Activated T-helper 1 cell treated with anti-CD3 and anti-CD28 coated beads, Interleukin-12 subunit alpha, Interleukin-12 subunit beta, Interleukin-2, Interleukin-4 antibody, amounts not matched to agents 30 ng/mL and 10 ng/mL and 1 ng/mL, durations not matched to agents 14 hours and 24 hours and 36 hours (primary cell): ENCODE measurements at regions of chr2 and their contacts with region 1.

Region 1: DNA sequence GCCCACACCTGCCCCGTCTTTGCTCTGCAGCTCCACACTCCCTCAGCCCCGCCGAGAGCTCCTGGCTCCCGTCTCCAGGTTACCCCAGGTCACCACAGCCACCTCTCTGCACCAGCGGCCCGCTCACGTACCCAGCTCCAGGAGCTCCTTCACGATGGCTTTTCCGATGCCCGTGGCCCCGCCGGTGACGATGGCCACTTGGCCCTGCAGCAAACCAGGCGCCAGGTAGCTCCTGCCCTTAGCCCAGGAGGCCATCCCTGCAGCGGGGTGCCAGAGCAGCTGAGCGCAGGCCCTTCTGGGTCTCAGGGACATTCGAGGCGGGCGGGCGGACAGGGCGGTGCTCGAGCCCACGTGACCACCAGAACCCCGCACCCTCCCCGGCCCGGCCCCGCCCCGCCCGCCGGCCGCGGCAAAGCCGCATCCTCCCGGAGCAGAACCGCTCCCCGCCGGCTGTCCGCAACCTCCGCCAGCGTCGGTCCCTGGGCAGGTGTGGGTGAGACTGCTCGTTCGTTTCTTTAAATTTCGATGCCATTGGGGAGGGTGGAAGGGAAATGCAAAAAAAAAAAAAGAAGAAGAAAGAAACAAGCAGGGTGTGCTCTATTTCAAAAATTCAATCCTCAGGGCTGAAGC is at the starts of genes PECR and TMEM169:
- DNase-seq: peak; percentile 74
- H3K4me3 Mint-ChIP-seq: peak within 1 kb of the TSS; percentile 99
- H3K27ac Mint-ChIP-seq: peak within 1 kb of the TSS; percentile 84
- H3K4me1 Mint-ChIP-seq: peaks cover 49% of the 10 kb centered on the region
- H3K27me3 Mint-ChIP-seq: no peaks in the 10 kb centered on the region
- total RNA-seq, gene PECR: 14.0 and 17.6 TPM in 2 replicates
- total RNA-seq, gene TMEM169: 0.93 and 2.2 TPM in 2 replicates

Region 2: DNA sequence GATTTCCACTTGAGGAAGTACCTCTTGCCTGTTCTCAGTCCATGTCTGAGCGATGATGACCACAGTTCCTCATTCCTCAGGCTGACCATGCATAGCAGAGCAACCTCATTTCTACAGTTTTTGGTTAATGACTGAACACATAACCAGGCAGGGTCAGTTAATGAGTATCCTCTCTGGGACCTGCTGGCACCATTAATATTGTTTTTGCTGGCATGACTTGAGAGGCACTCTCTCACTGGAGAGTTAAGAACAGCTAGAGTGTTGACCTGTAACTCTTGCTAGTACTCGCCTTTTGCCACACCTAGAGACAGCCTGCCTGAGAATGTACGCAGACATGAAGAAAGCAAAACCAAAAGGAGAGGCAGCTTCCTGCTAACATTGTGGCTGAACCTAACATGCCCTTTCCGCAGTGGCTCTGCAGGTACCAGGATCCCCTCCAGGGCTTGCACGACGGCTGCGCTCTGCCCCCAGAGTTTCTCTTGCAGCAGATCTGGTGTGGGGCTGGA is 23.9 kb before region 1 on chr2:
- intact Hi-C with region 1: loop called (anchors 2 kb)
- DNase-seq: peak; percentile 60
- H3K4me3 Mint-ChIP-seq: peak overlapping the region; percentile 81
- H3K27ac Mint-ChIP-seq: peak overlapping the region; percentile 91
- H3K4me1 Mint-ChIP-seq: peaks cover 32% of the 10 kb centered on the region
- H3K27me3 Mint-ChIP-seq: no peaks in the 10 kb centered on the region

Region 3: GRCh38 chr2:216119986-216120385 is 38.4 kb after region 1 on chr2:
- intact Hi-C with region 1: loop called (anchors 1 kb)
- DNase-seq: no peak
- H3K4me3 Mint-ChIP-seq: peak overlapping the region; percentile 78
- H3K27ac Mint-ChIP-seq: peak overlapping the region; percentile 95
- H3K4me1 Mint-ChIP-seq: peaks cover 78% of the 10 kb centered on the region
- H3K27me3 Mint-ChIP-seq: no peaks in the 10 kb centered on the region

Region 4: GRCh38 chr2:216572582-216573578 is 491.3 kb after region 1 on chr2:
- intact Hi-C with region 1: no loop called
- DNase-seq: no peak
- H3K4me3 Mint-ChIP-seq: no peak overlapping the region
- H3K27ac Mint-ChIP-seq: no peak overlapping the region
- H3K4me1 Mint-ChIP-seq: no peaks in the 10 kb centered on the region
- H3K27me3 Mint-ChIP-seq: peaks cover 9% of the 10 kb centered on the region